ENCODE measurements at regions of chr14 and their contacts with region 1.

Region 1: DNA sequence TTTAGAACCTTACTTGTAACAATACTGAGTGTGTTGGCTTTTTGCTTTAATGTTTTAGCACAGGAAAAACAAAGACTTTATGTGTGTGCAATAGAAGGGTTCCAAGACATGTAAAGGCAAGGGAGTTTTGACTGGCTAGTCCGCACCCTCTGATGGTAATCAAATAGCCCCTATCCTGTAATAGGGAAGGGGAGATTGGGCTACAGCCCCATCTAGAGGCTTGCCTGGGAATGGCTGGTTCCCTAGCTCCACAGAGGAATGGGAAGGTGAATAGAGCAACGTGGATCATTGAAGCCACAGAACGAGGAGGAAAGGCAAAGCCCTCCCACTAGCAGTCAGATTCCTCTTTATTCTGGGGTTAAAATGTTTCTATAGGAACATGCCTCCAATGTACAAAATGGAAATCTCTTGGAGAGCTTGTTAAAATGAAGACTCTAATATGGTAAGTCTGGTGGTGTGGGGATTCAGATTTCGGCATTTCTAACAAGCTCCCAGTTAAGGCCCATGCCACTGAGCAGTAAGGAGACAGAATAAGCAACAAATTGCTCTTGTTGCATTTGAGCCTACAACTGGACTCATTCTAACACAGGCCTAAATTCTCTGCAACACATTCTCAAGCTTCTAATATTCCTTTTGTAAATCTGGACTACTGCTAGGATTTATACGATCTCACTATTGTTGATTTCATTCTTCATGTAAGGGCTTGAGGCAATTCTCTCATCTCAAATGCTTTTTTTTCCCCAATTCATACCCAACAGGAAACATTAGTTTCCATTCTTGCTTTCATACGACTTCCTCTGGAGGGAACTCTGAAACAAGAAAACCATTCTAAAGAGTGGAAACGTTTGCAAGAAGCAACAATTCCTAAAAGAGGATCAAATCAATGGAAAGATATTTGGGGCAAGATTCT is 57.1 kb downstream of the NIN start:
- DNase-seq: no peak
- ATAC-seq: peak; percentile 67
- H3K4me3 Mint-ChIP-seq: no peak overlapping the region
- H3K27ac Mint-ChIP-seq: no peak overlapping the region
- H3K4me1 Mint-ChIP-seq: peaks cover 17% of the 10 kb centered on the region
- H3K27me3 Mint-ChIP-seq: no peaks in the 10 kb centered on the region
- CTCF ChIP-seq: no peak

Region 2: GRCh38 chr14:50520947-50521815 is 252.7 kb before region 1 on chr14:
- CTCF ChIA-PET with region 1: no interaction called
- POLR2A ChIA-PET with region 1: no interaction called
- intact Hi-C with region 1: no loop called
- DNase-seq: no peak
- ATAC-seq: peak; percentile 71
- H3K4me3 Mint-ChIP-seq: peak overlapping the region; percentile 2
- H3K27ac Mint-ChIP-seq: peak overlapping the region; percentile 66
- H3K4me1 Mint-ChIP-seq: peaks cover 44% of the 10 kb centered on the region
- H3K27me3 Mint-ChIP-seq: no peaks in the 10 kb centered on the region
- CTCF ChIP-seq: no peak

Region 3: GRCh38 chr14:50599700-50600444 is 174.0 kb before region 1 on chr14:
- CTCF ChIA-PET with region 1: interaction called, 9 read pairs
- POLR2A ChIA-PET with region 1: no interaction called
- intact Hi-C with region 1: loop called (anchors 1 kb)
- DNase-seq: no peak
- ATAC-seq: no peak
- H3K4me3 Mint-ChIP-seq: no peak overlapping the region
- H3K27ac Mint-ChIP-seq: no peak overlapping the region
- H3K4me1 Mint-ChIP-seq: no peaks in the 10 kb centered on the region
- H3K27me3 Mint-ChIP-seq: no peaks in the 10 kb centered on the region
- CTCF ChIP-seq: no peak

Region 4: GRCh38 chr14:50756300-50756699 is 17.6 kb before region 1 on chr14:
- CTCF ChIA-PET with region 1: interaction called, 17 read pairs
- POLR2A ChIA-PET with region 1: no interaction called
- intact Hi-C with region 1: loop called (anchors 2 kb)
- DNase-seq: peak; percentile 28
- ATAC-seq: peak; percentile 91
- H3K4me3 Mint-ChIP-seq: no peak overlapping the region
- H3K27ac Mint-ChIP-seq: no peak overlapping the region
- H3K4me1 Mint-ChIP-seq: peaks cover 6% of the 10 kb centered on the region
- H3K27me3 Mint-ChIP-seq: no peaks in the 10 kb centered on the region
- CTCF ChIP-seq: no peak

Region 5: GRCh38 chr14:50785457-50786063 is 11.7 kb after region 1 on chr14:
- CTCF ChIA-PET with region 1: interaction called, 60 read pairs
- POLR2A ChIA-PET with region 1: interaction called, 5 read pairs
- intact Hi-C with region 1: no loop called
- DNase-seq: no peak
- ATAC-seq: no peak
- H3K4me3 Mint-ChIP-seq: peak overlapping the region; percentile 24
- H3K27ac Mint-ChIP-seq: peak overlapping the region; percentile 71
- H3K4me1 Mint-ChIP-seq: peaks cover 72% of the 10 kb centered on the region
- H3K27me3 Mint-ChIP-seq: no peaks in the 10 kb centered on the region
- CTCF ChIP-seq: no peak